ENCODE measurements at regions of chr7 and their contacts with region 1.

Region 1: GRCh38 chr7:81190997-81191768 is 272.3 kb upstream of the SEMA3C start:
- DNase-seq: no peak
- ATAC-seq: peak; percentile 84

Region 2: DNA sequence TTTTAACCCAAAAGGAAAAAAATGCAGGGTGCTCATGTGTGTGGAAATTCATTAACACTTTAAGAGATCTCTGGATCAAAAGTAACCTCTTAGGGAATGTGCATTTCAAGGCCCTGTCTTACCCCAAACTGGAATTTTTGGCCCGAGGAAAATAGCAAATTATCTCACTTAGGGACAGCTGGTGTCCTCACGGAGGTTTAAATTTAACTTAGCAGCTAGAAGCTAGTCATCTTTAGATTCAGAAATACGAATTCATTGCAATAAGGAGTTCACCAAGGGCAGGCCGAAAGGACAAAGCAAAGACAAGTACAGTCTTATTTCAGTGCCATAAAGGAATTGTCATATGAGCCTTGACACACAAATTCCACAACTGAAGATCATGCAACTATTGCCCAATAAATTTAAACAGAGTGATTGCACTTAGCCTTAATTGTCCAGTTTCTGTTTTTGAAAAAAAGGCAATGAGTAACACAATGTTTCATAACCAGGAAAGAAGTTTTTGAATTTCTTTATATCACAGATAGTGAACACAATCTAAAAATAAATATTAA is 249.9 kb before region 1 on chr7:
- intact Hi-C with region 1: loop called (anchors 10 kb)
- DNase-seq: no peak
- ATAC-seq: peak; percentile 56

Region 3: DNA sequence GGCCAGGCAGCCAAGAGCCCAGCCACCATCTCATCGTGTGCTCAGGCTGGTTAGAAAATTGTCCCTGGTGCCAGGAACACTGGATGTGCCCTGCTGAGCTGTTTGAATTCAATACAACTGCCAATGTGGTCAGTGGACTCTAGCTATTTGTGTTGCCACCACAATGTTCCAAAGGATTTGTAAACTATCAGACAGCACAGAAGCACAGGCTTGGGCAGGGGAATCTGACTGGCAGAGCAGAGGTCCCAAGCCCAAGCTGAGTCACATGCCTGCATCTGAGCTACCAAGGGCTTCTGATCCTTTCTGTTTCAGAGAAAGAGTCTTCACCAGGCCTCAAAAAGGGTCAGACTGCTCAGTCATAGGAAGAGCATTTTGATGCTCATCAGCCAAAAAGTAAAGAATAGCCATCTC is 40.2 kb before region 1 on chr7:
- intact Hi-C with region 1: loop called (anchors 5 kb)
- DNase-seq: no peak
- ATAC-seq: peak; percentile 95